ENCODE measurements at regions of chr14 and their contacts with region 1.

Region 1: DNA sequence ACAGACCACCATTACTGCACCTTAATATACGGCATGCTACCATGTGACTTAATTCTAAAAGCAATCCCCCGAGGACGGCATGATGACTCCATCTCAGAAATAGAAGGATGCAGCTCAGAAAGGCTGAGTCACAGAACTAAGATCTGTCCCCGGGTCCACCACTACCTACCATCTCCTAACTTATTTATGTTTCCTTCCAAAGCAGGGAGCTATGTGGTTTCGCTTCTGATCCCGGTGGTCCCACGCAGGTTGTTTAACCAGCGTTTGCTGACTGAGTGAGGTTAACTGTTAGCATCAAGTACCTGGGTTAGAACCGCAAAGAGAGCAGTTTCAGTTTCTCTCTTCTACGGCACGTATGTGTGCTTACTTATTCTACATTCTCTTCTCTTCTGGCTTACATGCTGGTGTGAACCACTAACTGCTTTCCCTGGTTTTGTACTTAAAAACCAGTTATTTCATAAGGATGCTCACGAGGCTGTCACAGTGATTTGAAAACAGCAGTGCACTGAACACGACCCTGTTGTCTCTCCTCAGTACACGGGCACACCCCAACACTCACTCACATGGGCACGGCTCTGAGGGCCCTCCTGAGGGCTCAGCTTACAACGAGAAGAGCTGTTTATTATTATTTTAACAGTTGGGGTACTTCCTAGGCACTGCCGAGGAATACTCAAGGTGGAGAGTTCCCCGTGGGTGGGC is 66.7 kb downstream of the CCDC88C start:
- DNase-seq: peak; percentile 75
- H3K4me3 Mint-ChIP-seq: peak overlapping the region; percentile 72
- H3K27ac Mint-ChIP-seq: peak overlapping the region; percentile 87
- H3K4me1 Mint-ChIP-seq: peaks cover 80% of the 10 kb centered on the region
- H3K27me3 Mint-ChIP-seq: no peaks in the 10 kb centered on the region

Region 2: DNA sequence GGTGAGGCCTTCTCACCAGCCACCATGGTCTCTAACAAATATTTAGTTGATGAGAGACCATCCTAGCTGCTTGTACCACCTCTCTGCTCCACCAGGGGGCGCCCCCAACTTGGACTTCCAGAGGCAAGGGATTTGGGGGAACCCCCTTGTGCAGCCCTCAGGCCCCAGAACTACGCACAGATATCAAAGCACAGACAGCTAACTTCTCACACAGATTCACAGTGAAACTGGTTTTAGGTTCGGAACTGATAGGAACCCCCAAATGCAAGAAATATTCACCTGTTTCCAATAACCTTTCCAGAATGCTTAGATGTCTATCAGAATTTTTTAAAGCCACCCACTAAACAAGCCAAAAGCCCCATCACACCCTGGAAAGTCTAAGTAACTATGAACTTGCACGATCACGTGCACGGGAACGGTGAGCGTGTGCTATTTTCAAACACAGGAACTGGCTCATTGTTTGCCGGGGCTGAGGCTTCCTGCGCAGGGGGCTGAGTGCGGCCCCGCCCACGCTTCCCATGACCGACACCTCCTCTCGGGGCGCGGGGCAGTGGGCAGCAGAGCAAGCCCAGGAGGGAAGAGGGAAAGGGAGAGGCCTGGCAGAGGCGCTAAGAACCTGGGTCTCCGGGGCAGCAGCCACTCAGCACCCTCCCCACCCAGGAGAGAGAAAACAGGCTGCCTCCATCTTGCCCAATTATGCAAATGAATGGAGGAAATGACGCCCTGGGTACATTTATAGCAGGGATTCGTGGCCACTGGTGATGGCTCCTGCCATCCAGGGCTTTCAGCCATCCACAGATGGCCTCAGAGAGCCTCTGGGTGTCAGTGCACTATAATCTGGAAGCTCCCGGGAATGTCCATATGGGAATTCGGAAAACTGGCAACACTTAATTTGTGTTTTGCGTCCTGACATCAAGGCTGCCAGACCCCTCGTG is 27.0 kb before region 1 on chr14:
- intact Hi-C with region 1: loop called (anchors 1 kb)
- DNase-seq: peak; percentile 84
- H3K4me3 Mint-ChIP-seq: peak overlapping the region; percentile 75
- H3K27ac Mint-ChIP-seq: peak overlapping the region; percentile 99
- H3K4me1 Mint-ChIP-seq: peaks cover 47% of the 10 kb centered on the region
- H3K27me3 Mint-ChIP-seq: no peaks in the 10 kb centered on the region

Region 3: DNA sequence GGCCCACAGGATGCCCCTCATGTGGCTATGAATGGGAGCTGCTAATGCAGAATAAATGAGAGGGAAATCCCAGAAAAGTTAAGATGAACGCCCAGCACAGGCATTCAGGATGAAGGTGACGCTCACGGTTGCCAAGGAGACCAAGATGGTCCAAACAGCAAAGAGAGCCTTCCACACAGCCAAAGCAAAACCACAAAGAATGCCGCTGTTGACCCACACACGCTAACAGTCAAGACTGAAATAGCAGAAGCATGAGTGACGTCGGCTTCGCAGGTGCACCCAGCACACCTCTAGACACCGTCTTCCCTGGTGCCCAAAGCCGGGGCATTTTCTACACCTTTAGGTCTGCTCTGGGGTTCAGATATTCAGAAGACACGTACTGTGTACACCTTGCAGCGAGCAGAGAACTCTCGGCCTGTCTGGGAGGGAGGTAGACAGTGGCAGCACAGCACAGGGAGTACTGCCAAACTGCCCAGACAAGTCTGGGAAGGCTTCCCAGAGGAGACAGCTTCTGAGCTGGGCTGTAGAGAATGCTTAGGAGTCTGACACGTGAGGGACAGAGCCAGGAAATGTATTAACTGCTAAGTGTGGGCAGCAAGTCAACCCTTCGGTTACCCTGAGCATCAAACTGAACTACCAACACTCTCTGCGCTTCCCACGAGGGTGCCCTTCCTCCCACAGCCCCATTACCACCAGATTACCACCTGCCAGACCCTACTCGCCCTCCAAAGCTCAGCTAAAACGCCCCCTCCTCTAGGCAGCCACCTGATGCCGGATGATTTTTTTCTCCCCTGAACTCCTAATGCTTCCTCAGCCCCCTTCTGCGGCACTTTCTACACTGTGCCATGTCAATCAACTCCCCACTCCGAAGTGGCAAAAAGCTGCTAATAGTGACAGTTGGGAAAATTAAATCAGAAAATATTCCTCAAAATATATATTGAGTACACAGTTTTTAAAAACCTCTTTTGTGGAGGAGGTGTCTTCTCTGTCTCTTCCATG is 16.5 kb after region 1 on chr14:
- intact Hi-C with region 1: loop called (anchors 1 kb)
- DNase-seq: no peak
- H3K4me3 Mint-ChIP-seq: peak overlapping the region; percentile 48
- H3K27ac Mint-ChIP-seq: peak overlapping the region; percentile 79
- H3K4me1 Mint-ChIP-seq: peaks cover 68% of the 10 kb centered on the region
- H3K27me3 Mint-ChIP-seq: no peaks in the 10 kb centered on the region

Measured in activated T-helper 2 cell treated with anti-CD3 and anti-CD28 coated beads, Interferon-gamma antibody, Interleukin-2, Interleukin-4, amounts not matched to agents 10 μg/mL and 5 μg/mL and 100 μg/mL, durations not matched to agents 14 hours and 24 hours and 36 hours (primary cell).